Endothelial cell of umbilical vein (primary cell): ENCODE measurements at regions of chr4 and their contacts with region 1.

Region 1: DNA sequence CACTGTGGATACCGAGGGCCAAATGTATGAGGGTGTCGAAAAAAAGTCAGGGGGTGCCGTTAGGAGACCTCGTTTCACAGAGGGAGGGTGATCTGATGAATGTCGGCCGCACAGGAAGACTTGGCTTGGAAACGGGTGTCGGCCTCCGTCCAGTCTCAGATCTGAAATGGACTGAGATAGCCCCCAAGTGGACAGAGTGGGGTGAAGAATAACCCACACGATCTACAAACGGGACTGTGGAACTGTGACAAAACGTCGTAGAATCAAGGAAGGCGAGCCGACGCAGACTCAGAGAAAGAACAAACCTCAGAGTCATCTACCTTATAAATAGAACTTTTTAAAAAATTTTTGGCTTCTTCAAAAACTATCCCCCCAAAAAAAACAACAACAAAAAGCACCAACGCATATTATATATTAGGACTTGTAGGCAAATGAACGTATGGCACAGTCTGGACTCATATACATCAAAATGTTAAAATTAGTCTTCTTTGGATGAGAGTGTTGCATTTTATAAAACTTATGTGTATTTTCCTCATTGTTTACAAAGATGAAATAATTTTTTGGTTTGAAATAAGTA is 63.8 kb upstream of the IRF2 start:
- DNase-seq: peak; percentile 92
- H3K4me3 ChIP-seq: peak overlapping the region; percentile 69 to 86 (median 71)
- H3K27ac ChIP-seq: peak overlapping the region; percentile 97
- H3K4me1 ChIP-seq: peaks cover 28% of the 10 kb centered on the region
- H3K27me3 ChIP-seq: no peaks in the 10 kb centered on the region
- CTCF ChIP-seq: peak; percentile 60 to 66
- POLR2A ChIP-seq: no peak

Region 2: DNA sequence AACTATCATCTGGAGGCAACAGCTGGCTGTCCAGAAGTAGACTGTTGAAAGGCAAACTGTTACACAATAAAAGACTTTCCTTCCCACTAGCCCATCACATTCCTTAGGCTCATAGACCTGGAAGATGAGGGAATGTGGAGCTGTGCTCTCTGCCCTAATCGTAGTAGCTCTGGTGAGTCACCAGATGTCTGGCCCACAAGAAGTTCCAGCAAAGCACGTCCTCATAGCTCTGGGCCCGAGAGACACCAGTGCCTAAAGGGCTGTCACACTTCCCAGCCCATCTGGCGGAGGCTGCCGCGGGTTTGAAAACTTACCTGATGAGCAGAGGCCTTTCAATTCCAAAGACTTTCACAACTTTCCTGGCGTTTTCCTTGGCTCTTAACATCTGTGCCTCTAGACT is 714.7 kb before region 1 on chr4:
- CTCF ChIA-PET with region 1: no interaction called
- POLR2A ChIA-PET with region 1: no interaction called
- dilution Hi-C with region 1: no loop called
- intact Hi-C with region 1: no loop called
- DNase-seq: no peak
- H3K4me3 ChIP-seq: no peak overlapping the region
- H3K27ac ChIP-seq: no peak overlapping the region
- H3K4me1 ChIP-seq: no peaks in the 10 kb centered on the region
- H3K27me3 ChIP-seq: no peaks in the 10 kb centered on the region
- CTCF ChIP-seq: no peak
- POLR2A ChIP-seq: no peak

Region 3: GRCh38 chr4:183840311-183840710 is 697.8 kb before region 1 on chr4:
- CTCF ChIA-PET with region 1: no interaction called
- POLR2A ChIA-PET with region 1: no interaction called
- dilution Hi-C with region 1: no loop called
- intact Hi-C with region 1: loop called (anchors 5 kb)
- DNase-seq: peak; percentile 67
- H3K4me3 ChIP-seq: no peak overlapping the region
- H3K27ac ChIP-seq: no peak overlapping the region
- H3K4me1 ChIP-seq: no peaks in the 10 kb centered on the region
- H3K27me3 ChIP-seq: peaks cover 0 to 1% of the 10 kb centered on the region in 2 experiments
- CTCF ChIP-seq: peak; percentile 77 to 80
- POLR2A ChIP-seq: no peak

Region 4: DNA sequence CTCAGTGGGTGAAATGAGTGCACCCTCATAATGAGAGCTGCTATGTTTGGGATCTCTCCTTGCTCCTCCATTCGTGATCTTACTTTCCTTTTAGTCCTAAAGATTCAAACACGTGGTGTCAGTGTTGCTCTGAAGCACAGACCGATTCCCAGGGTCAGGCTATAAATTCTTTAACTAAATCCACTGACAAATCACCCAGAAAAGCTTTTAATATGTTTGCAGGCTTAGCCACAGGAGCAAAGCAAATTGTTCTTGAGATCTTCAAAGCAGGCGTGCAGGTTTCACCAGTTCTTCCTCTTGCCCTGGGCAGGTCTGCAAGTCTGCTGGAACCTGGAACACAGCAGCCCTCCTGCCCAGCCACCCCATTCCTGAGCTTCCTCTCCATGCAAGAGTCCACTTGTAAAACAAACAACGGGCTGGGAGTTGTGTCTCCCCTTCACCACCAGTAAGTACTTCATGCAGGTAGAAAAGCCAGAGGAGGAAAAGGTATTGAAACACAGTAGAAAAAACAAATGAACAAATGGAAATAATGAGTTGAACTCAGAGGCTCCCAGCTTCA is 250.3 kb before region 1 on chr4:
- CTCF ChIA-PET with region 1: interaction called, 21 read pairs
- POLR2A ChIA-PET with region 1: no interaction called
- dilution Hi-C with region 1: no loop called
- intact Hi-C with region 1: loop called (anchors 1 kb)
- DNase-seq: peak; percentile 55
- H3K4me3 ChIP-seq: no peak overlapping the region
- H3K27ac ChIP-seq: no peak overlapping the region
- H3K4me1 ChIP-seq: no peaks in the 10 kb centered on the region
- H3K27me3 ChIP-seq: no peaks in the 10 kb centered on the region
- CTCF ChIP-seq: no peak
- POLR2A ChIP-seq: no peak

Region 5: DNA sequence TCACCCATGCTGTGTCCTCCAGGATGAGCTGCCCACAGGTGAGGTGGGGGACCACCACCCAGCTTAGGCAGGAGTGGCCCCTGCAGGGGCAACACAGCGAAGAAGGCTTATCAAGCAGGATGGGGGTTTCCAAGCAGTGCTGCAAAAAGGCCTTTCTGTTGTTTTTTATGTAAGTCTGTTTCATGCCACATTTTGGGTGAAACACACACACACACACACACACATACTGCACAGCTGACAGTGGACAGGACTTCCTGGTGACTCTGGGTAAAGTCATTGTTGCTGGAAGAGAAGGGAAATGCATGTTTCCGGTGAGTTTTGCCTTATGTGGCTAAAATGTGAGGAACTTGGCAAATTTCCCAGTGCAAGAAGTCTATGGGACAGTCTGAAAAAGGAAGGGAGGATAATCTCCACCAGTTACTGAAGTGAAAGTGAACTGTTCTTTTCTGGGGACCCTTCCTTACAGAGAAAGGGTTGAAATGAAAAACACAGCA is 183.0 kb before region 1 on chr4:
- CTCF ChIA-PET with region 1: interaction called, 4 read pairs
- POLR2A ChIA-PET with region 1: no interaction called
- dilution Hi-C with region 1: no loop called
- intact Hi-C with region 1: loop called (anchors 1 kb)
- DNase-seq: peak; percentile 98
- H3K4me3 ChIP-seq: no peak overlapping the region
- H3K27ac ChIP-seq: peak overlapping the region; percentile 72
- H3K4me1 ChIP-seq: peaks cover 13% of the 10 kb centered on the region
- H3K27me3 ChIP-seq: no peaks in the 10 kb centered on the region
- CTCF ChIP-seq: no peak
- POLR2A ChIP-seq: peak; percentile 73

Region 6: GRCh38 chr4:184417802-184418511 is 120.2 kb before region 1 on chr4:
- CTCF ChIA-PET with region 1: no interaction called
- POLR2A ChIA-PET with region 1: no interaction called
- dilution Hi-C with region 1: no loop called
- intact Hi-C with region 1: no loop called
- DNase-seq: peak; percentile 30
- H3K4me3 ChIP-seq: no peak overlapping the region
- H3K27ac ChIP-seq: no peak overlapping the region
- H3K4me1 ChIP-seq: peaks cover 11% of the 10 kb centered on the region
- H3K27me3 ChIP-seq: no peaks in the 10 kb centered on the region
- CTCF ChIP-seq: no peak
- POLR2A ChIP-seq: no peak

Region 7: GRCh38 chr4:184575306-184575705 is 37.2 kb after region 1 on chr4:
- CTCF ChIA-PET with region 1: no interaction called
- POLR2A ChIA-PET with region 1: interaction called, 3 read pairs
- dilution Hi-C with region 1: no loop called
- intact Hi-C with region 1: loop called (anchors 1 kb)
- DNase-seq: peak; percentile 13
- H3K4me3 ChIP-seq: peak overlapping the region in 1 of 3 experiments; percentile 47
- H3K27ac ChIP-seq: peak overlapping the region; percentile 73
- H3K4me1 ChIP-seq: peaks cover 20% of the 10 kb centered on the region
- H3K27me3 ChIP-seq: no peaks in the 10 kb centered on the region
- CTCF ChIP-seq: no peak
- POLR2A ChIP-seq: no peak

Region 8: DNA sequence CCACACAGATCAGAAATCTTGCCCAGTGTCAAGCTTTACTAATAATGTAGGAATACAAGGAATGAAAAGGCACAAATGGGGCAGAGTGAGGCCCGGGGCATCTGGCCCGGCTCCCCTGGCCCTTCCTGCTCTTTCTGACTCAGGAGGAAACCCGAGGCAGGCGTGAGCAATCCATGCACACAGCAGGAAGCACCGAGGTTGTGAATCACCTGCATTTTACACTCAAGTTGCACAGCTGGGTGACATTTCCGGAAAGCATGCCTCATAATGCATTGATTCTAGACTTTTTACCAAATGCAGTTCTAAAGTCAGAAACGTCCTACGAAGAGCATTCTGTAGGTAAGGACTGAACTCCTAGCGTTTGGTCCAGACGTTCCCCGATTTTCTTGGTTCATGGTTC is 150.3 kb after region 1 on chr4:
- CTCF ChIA-PET with region 1: no interaction called
- POLR2A ChIA-PET with region 1: no interaction called
- dilution Hi-C with region 1: no loop called
- intact Hi-C with region 1: loop called (anchors 1 kb)
- DNase-seq: peak; percentile 93
- H3K4me3 ChIP-seq: no peak overlapping the region
- H3K27ac ChIP-seq: peak overlapping the region; percentile 77
- H3K4me1 ChIP-seq: peaks cover 18% of the 10 kb centered on the region
- H3K27me3 ChIP-seq: no peaks in the 10 kb centered on the region
- CTCF ChIP-seq: no peak
- POLR2A ChIP-seq: peak; percentile 54